Prostate gland (tissue), 2 donors: ENCODE measurements at regions of chrX and their contacts with region 1.

Region 1: DNA sequence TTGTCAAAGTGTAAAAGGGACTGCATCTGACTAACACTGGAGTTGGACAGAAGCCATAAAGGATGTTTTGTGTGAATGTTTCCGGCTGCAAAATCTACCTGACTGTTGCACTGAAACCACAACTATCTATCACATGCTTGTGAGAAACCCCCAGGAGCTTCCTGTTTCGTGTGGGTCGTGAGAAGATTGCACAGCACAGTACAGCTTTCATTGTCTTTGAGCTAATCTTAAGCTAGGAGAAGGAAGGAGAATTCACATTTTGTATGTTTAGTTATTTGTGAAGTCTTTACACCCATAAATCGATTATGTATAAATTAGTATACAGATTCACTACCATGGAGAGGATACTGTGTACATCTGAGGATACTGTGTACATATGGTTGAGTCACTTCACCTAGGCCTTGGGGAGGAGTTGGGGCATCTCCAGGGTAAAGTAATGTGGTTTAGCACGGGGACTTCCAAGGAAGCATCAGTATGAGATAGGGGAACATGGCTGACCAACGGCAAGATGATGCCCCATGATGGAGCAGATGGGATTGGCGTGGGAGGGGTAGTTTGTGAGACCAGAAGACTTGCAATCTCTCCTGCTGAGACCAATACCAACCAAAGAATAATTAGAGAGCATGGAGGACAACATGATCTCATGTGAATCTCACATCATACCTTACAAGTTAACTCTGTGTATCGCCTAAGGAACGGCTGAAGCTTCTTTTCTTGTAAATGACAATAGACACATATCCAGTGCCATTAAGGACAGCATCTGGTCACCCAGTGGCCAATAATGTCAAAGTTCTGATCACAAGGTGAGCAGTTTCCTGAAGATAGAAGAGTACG is 43.1 kb upstream of the FAM9C start:
- DNase-seq: no peak
- H3K4me3 ChIP-seq: no peak overlapping the region
- H3K27ac ChIP-seq: no peak overlapping the region
- H3K4me1 ChIP-seq: no peaks in the 10 kb centered on the region
- H3K27me3 ChIP-seq: no peaks in the 10 kb centered on the region
- CTCF ChIP-seq: no peak
- POLR2A ChIP-seq: no peak

Region 2: DNA sequence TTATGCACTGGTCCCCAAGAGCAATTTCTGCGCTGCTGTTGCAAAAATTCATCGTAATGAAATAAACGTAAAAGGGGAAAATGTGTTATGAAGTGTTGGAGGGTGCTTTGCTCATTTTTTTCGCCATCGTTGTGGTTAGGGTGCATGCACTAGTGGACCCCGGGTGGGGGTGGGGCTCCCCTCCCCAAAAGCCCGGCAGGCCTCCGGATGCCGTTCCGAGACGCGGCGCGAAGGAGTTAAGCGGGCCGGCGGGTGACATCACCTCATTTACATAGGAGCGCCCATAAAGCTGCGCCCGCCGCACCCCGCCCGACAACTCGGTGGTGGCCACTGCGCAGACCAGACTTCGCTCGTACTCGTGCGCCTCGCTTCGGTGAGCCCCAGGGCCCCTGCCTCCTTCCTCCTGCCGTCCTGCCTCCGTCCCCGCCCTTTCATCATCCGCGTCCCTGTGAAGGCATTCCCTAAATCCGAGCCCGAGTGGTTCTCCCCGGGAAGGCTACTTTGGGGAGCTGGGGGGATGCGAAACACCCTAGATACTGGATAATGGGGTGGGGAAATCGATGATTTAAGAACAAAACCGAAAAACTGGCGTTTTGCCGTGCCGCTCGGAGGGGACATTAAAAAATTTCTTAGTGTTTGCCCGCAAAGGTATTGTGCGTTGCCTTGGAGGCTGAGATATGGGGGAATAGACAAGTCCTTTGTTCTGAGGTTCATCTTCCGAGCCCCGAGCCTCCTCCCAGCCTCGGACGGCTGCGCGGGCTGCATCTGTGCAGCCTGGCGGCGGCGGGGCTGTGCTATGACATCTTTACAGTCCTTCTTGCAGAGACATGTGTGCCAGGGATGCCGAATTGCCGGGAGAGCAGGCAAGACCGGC is 112.5 kb before region 1 on chrX and contains the start of gene TMSB4X:
- intact Hi-C with region 1: loop called (anchors 5 kb)
- DNase-seq: peak; percentile 77
- H3K4me3 ChIP-seq: peak within 1 kb of the TSS; percentile 51 to 55
- H3K27ac ChIP-seq: peak within 1 kb of the TSS; percentile 86 to 87
- H3K4me1 ChIP-seq: no peaks in the 10 kb centered on the region
- H3K27me3 ChIP-seq: no peaks in the 10 kb centered on the region
- CTCF ChIP-seq: peak in 2 of 4 experiments; percentile 8 to 17
- POLR2A ChIP-seq: peak; percentile 90
- total RNA-seq, gene TMSB4X: 1,116 to 1,330 TPM